ENCODE measurements at regions of chr14 and their contacts with region 1.

Region 1: DNA sequence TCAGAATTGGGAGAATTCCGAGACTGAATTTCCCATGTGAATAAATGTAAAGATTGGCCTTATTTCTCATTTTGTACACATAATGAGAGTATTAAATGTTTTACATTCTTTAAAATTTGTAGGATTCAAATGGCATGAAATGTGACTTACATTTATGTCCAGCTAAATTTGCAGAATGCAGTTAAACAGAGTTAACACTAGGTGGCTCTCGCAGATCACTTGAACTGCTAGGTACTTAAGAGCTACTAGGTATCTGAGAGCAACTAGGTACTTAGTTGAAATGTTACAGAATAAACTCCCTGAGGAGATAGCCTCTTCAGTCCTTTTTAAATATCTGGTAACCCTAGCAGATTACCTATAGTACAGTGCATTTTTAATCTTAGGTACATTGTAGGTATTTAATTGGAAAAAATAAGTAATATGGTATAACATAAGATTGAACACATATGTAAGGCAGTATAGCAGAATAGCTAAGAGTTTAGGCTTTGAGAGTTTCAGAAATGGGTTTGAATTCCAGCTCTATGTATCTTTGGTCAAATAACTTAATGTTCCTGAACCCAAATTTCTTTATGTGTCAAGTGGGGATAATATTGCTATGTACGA is 73.8 kb downstream of the KIAA0586 start:
- DNase-seq: peak; percentile 27
- H3K4me3 ChIP-seq: no peak overlapping the region
- H3K27me3 ChIP-seq: no peaks in the 10 kb centered on the region
- CTCF ChIP-seq: peak; percentile 78

Region 2: GRCh38 chr14:58626431-58626831 is 125.1 kb after region 1 on chr14:
- CTCF ChIA-PET with region 1: interaction called, 5 read pairs
- POLR2A ChIA-PET with region 1: interaction called, 13 read pairs
- DNase-seq: peak; percentile 61
- H3K4me3 ChIP-seq: no peak overlapping the region
- H3K27me3 ChIP-seq: no peaks in the 10 kb centered on the region; the same call in 1 of the 2 replicates
- CTCF ChIP-seq: no peak

Region 3: GRCh38 chr14:59004012-59004411 is 502.7 kb after region 1 on chr14:
- CTCF ChIA-PET with region 1: interaction called, 17 read pairs
- POLR2A ChIA-PET with region 1: no interaction called
- DNase-seq: no peak
- H3K4me3 ChIP-seq: no peak overlapping the region
- H3K27me3 ChIP-seq: peaks cover 2% of the 10 kb centered on the region
- CTCF ChIP-seq: peak; percentile 30; the same call in 1 of the 2 replicates

Region 4: GRCh38 chr14:59055439-59056045 is 554.2 kb after region 1 on chr14:
- CTCF ChIA-PET with region 1: interaction called, 13 read pairs
- POLR2A ChIA-PET with region 1: no interaction called
- DNase-seq: peak; percentile 9
- H3K4me3 ChIP-seq: no peak overlapping the region
- H3K27me3 ChIP-seq: no peaks in the 10 kb centered on the region
- CTCF ChIP-seq: peak; percentile 85

Region 5: DNA sequence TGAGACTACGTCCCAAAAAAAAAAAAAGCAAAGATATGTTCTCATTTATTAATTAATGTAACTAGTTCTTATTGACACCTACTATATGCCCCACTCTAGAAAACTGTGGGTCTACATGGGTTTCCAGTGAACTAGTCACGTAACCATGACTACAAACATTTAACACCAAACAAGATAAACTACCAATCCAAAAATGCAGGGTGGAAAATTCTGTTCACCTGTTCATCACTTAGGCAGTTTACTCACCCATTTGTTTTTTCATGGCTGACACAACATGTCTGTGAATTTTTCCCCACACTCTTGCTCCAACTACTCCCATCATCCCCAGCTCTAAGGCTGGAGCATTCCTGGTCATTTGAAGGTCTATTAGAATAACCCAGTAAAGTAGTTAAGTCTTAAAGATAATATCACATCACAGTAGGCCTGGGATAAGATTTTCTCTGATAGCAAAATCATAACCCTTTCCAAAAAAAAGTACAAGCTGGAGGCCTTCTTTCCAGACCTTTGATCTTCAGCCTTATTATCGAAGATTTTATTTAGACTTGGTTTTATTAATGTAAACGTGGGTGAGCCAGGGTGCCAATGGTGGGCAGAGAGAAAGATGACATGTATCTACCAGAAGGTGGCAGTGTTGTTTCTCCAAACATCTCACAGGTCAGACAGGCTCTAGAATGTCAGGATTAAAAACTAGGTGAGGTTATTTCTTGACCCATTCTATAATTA is 625.6 kb after region 1 on chr14:
- CTCF ChIA-PET with region 1: interaction called, 26 read pairs
- POLR2A ChIA-PET with region 1: no interaction called
- DNase-seq: no peak
- H3K4me3 ChIP-seq: no peak overlapping the region
- H3K27me3 ChIP-seq: no peaks in the 10 kb centered on the region
- CTCF ChIP-seq: peak; percentile 68